SK-N-SH (cell line): ENCODE measurements at regions of chr18 and their contacts with region 1.

Region 1: DNA sequence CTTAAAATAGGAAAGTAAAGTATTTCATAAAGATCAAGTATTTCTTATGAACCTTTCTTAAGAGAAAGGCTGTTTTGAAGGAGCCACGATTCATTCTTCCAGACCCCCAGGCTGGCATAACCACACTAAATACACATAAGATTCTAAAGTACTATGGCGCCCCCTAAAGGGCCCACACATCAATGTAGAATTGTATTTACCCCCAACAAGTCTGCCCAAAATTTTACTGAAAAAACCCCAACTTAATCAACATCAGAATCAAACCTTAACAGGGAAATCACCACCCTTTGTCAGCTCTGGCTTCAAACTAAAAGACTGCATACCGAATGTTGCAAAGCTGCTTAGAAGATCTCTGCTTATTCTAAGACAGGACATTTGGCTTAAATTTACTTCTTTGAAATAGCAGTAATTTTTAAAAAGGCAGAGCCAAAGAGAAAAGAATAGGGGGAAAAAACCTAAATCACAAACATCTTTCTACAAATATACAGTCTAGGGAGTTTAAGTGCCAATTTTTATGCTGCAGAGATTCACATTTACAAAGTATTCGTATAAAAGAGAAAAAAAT is 20.4 kb upstream of the BCL2 start:
- DNase-seq: peak; percentile 49
- H3K4me3 ChIP-seq: no peak overlapping the region
- H3K27ac ChIP-seq: no peak overlapping the region
- H3K4me1 ChIP-seq: no peaks in the 10 kb centered on the region
- H3K27me3 ChIP-seq: no peaks in the 10 kb centered on the region
- CTCF ChIP-seq: peak; percentile 79
- EP300 ChIP-seq: no peak
- RAD21 ChIP-seq: peak; percentile 67

Region 2: GRCh38 chr18:63016270-63016669 is 323.7 kb before region 1 on chr18:
- CTCF ChIA-PET with region 1: interaction called, 50 read pairs
- POLR2A ChIA-PET with region 1: no interaction called
- DNase-seq: peak; percentile 82
- H3K4me3 ChIP-seq: peak overlapping the region in 1 of 2 experiments; percentile 4; a peak in 1 of 4 replicates
- H3K27ac ChIP-seq: no peak overlapping the region
- H3K4me1 ChIP-seq: no peaks in the 10 kb centered on the region
- H3K27me3 ChIP-seq: peaks cover 4% of the 10 kb centered on the region; the same call in 1 of the 2 replicates
- CTCF ChIP-seq: peak; percentile 91
- EP300 ChIP-seq: no peak
- RAD21 ChIP-seq: peak; percentile 97

Region 3: GRCh38 chr18:63025251-63026090 is 314.5 kb before region 1 on chr18:
- CTCF ChIA-PET with region 1: interaction called, 14 read pairs
- POLR2A ChIA-PET with region 1: no interaction called
- DNase-seq: peak; percentile 68
- H3K4me3 ChIP-seq: no peak overlapping the region
- H3K27ac ChIP-seq: peak overlapping the region in 1 of 2 experiments; percentile 6; a peak in 2 of 4 replicates
- H3K4me1 ChIP-seq: peaks cover 0 to 7% of the 10 kb centered on the region in 2 experiments; a peak in 1 of 4 replicates
- H3K27me3 ChIP-seq: no peaks in the 10 kb centered on the region
- CTCF ChIP-seq: peak; percentile 34
- EP300 ChIP-seq: no peak
- RAD21 ChIP-seq: peak; percentile 78

Region 4: GRCh38 chr18:63329431-63330145 is 10.4 kb before region 1 on chr18:
- CTCF ChIA-PET with region 1: interaction called, 21 read pairs
- POLR2A ChIA-PET with region 1: no interaction called
- DNase-seq: no peak
- H3K4me3 ChIP-seq: no peak overlapping the region
- H3K27ac ChIP-seq: no peak overlapping the region
- H3K4me1 ChIP-seq: no peaks in the 10 kb centered on the region
- H3K27me3 ChIP-seq: no peaks in the 10 kb centered on the region
- CTCF ChIP-seq: no peak
- EP300 ChIP-seq: no peak
- RAD21 ChIP-seq: no peak

Region 5: DNA sequence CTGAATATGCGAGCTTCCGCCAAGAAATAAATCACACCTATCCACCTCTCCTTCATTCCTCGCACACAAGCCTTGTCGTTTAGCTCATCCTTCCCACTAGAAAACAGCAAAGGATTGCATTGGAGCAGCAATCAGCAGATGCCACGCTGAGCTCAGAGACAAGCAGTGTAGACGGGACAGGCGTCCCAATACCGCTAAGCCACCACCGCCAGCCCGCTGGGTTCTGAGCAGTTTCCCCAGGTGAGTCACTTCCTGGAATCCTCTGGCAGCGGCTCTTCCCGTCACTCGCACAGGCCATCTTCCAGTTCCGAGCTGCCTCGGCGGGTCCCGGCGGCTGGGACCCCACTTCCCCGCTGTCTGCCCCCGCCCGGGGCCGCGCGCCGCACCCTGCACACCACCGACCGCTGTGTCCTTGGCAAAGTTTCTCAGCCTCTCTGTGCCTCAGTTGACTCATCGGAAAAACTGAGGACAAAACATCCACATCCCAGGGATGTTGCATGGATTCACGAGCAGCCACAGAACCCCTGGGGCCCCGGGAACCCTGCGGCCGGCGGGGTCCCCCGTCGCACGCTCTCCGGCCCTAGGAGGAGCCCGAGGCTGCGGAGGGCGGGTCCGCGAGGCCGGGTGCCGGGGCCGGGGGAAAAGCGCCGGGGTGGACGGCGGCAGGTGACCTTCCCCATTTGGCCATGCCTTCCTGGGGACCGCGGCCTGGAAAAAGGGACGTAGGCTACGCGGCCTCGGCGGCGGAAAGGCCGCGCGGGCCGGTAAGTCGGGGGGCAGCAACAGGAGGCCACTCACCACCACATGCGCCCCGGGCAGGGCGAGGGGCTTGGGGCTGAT is 26.4 kb after region 1 on chr18:
- CTCF ChIA-PET with region 1: interaction called, 11 read pairs
- POLR2A ChIA-PET with region 1: no interaction called
- DNase-seq: peak; percentile 76
- H3K4me3 ChIP-seq: peak overlapping the region; percentile 77 to 93
- H3K27ac ChIP-seq: peak overlapping the region; percentile 83 to 97
- H3K4me1 ChIP-seq: peaks cover 3 to 7% of the 10 kb centered on the region in 2 experiments; a peak in 3 of 4 replicates
- H3K27me3 ChIP-seq: no peaks in the 10 kb centered on the region
- CTCF ChIP-seq: no peak
- EP300 ChIP-seq: no peak
- RAD21 ChIP-seq: no peak